CD14-positive monocyte (primary cell): ENCODE measurements at regions of chr6 and their contacts with region 1.

Region 1: DNA sequence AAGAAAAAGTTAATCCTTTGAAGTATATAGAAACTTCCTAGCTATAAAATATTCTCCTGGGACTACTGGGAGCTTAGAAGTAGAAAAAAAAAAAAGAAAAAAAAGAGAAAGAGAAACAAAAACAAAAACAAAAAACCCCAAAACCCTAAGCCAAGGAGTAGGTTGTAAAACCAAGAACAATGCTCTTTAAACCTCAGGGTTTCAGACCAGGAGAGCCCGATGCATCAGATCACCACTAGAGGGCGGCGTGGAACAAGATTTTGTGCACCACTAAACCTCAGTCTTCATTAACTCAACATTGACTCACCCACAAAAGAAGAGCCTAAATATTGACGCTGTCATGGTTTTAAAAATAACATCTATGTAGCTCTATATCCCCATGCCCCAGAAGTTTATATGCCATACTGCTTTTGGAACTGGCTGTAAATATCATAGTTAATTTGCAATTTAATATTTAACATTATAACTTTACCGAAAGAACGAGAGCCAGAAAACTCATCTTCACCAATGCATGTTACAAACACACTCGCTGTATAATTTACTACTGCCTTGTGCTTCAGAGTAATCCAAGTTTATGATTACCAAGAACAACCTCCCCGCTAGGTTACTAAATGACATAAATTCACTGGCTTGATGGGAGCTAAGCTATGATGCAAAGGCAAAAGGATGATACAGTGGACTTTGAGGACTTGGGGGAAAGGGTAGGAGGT is 19.2 kb downstream of the MCUR1 start:
- DNase-seq: peak; percentile 67 to 78 (median 74)
- H3K4me3 ChIP-seq: no peak overlapping the region
- H3K4me3 Mint-ChIP-seq: no peak overlapping the region
- H3K27ac ChIP-seq: no peak overlapping the region
- H3K27ac Mint-ChIP-seq: peak overlapping the region in 1 of 7 donors; percentile 24
- H3K4me1 ChIP-seq: peaks cover 0 to 4% of the 10 kb centered on the region in 2 donors
- H3K4me1 Mint-ChIP-seq: peaks cover 4% of the 10 kb centered on the region
- H3K27me3 ChIP-seq: no peaks in the 10 kb centered on the region
- H3K27me3 Mint-ChIP-seq: no peaks in the 10 kb centered on the region
- CTCF ChIP-seq: peak; percentile 93

Region 2: DNA sequence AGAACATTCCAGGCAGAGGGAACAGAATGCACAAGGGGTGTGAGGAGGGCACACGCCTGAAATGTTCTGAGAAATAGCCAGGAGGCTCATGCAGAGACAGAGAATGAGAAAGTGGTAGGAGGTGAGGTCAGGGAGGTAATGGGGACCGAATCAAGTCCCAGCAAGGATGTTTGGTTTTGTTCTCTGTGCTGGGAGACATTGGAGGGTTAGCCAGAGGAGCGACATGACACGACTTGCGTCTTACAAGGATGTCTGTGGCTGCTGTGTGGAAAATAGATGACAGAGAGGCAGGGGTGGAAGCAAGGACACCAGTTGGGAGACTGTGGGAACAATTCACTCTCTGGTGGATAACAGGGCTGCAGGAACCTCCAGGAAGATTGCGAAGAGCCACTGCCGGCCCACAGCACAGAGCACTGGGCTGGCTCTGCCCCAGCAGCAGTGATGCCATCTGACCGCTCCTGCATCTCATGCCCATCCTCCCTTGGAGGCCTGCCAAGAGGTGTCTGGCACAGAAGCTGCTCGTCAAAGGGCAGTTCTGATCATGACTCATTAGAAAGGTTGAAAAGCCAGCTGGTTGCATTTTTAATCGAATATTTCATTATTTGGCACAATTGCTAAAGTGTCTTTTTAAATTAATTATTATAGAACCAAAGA is 264.7 kb after region 1 on chr6:
- intact Hi-C with region 1: loop called in 1 of 2 experiments (anchors 5 kb)
- DNase-seq: no peak
- H3K4me3 ChIP-seq: no peak overlapping the region
- H3K4me3 Mint-ChIP-seq: no peak overlapping the region
- H3K27ac ChIP-seq: no peak overlapping the region
- H3K27ac Mint-ChIP-seq: no peak overlapping the region
- H3K4me1 ChIP-seq: no peaks in the 10 kb centered on the region
- H3K4me1 Mint-ChIP-seq: no peaks in the 10 kb centered on the region
- H3K27me3 ChIP-seq: peaks cover 13 to 15% of the 10 kb centered on the region in 2 donors
- H3K27me3 Mint-ChIP-seq: peaks cover 6 to 22% (median 11%) of the 10 kb centered on the region in 3 donors
- CTCF ChIP-seq: no peak

Region 3: DNA sequence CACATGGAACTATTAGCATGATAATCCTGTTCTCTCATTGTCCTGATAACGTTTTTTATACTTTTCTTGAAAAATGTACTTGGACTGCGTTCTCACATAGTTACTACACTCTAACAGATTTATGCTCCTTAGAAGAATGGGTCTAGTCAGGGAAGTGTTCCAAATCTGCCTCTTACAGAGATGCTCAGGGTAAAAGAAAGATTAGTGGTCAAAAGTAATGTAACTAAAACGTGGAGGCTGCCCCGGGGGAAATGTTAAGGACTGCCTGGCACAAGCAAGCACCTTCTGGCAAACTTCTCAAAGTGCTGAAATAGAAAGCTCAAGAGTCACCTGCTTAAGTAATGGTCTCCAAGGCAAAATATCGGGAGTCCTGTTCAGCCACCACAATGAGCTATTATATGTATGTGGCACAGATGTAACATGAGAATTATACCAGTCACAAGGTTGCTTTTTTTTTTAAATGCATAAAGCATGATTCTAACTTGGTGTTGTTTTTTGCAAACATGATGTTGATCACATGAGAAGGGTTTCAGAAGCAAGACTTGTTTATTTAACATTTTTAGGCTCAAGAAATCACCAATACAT is 1206.2 kb after region 1 on chr6:
- intact Hi-C with region 1: no loop called
- DNase-seq: no peak
- H3K4me3 ChIP-seq: no peak overlapping the region
- H3K4me3 Mint-ChIP-seq: no peak overlapping the region
- H3K27ac ChIP-seq: no peak overlapping the region
- H3K27ac Mint-ChIP-seq: no peak overlapping the region
- H3K4me1 ChIP-seq: no peaks in the 10 kb centered on the region
- H3K4me1 Mint-ChIP-seq: peaks cover 4% of the 10 kb centered on the region
- H3K27me3 ChIP-seq: no peaks in the 10 kb centered on the region
- H3K27me3 Mint-ChIP-seq: peaks cover 0 to 2% (median 0%) of the 10 kb centered on the region in 3 donors
- CTCF ChIP-seq: no peak

Region 4: GRCh38 chr6:15630202-15630601 is 1835.0 kb after region 1 on chr6:
- intact Hi-C with region 1: loop called in 1 of 2 experiments (anchors 10 kb)
- DNase-seq: no peak
- H3K4me3 ChIP-seq: no peak overlapping the region
- H3K4me3 Mint-ChIP-seq: no peak overlapping the region
- H3K27ac ChIP-seq: no peak overlapping the region
- H3K27ac Mint-ChIP-seq: peak overlapping the region in 1 of 7 donors; percentile 40
- H3K4me1 ChIP-seq: no peaks in the 10 kb centered on the region
- H3K4me1 Mint-ChIP-seq: peaks cover 7% of the 10 kb centered on the region
- H3K27me3 ChIP-seq: no peaks in the 10 kb centered on the region
- H3K27me3 Mint-ChIP-seq: no peaks in the 10 kb centered on the region
- CTCF ChIP-seq: no peak